Activated CD4-positive, alpha-beta memory T cell treated with anti-CD3 and anti-CD28 coated beads, Interleukin-2, amount 10 ng/mL, durations not matched to agents 7 days and 5 days (primary cell): ENCODE measurements at regions of chrX and their contacts with region 1.

Region 1: DNA sequence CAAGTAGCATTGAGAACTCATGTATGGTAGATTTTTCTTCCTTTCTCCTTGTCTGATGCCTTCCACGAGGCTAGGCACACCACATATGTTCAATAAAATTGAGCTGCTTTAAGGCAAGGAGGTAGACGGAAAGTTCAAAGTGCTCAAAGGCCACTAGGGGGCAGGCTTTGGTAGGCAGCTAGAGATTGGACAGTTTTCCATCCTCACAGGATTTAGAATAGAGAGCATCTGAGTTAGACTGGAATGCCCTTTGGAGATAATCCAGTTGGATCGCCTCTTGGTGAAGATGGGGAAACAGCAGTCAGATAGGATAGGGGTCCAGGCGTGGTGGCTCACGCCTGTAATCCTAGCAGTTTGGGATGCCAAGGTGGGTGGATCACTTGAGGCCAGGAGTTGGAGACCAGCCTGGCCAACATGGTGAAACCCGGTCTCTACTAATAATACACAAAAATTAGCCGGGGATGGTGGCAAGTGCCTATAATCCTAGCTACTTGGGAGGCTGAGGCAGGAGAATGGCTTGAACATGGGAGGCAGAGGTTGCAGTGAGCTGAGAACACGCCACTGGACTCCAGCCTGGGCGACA is 30.4 kb downstream of the ELF4 start:
- DNase-seq: peak; percentile 64
- H3K4me3 Mint-ChIP-seq: no peak overlapping the region
- H3K27ac Mint-ChIP-seq: peak overlapping the region; percentile 30
- H3K4me1 Mint-ChIP-seq: peaks cover 46% of the 10 kb centered on the region
- H3K27me3 Mint-ChIP-seq: no peaks in the 10 kb centered on the region

Region 2: DNA sequence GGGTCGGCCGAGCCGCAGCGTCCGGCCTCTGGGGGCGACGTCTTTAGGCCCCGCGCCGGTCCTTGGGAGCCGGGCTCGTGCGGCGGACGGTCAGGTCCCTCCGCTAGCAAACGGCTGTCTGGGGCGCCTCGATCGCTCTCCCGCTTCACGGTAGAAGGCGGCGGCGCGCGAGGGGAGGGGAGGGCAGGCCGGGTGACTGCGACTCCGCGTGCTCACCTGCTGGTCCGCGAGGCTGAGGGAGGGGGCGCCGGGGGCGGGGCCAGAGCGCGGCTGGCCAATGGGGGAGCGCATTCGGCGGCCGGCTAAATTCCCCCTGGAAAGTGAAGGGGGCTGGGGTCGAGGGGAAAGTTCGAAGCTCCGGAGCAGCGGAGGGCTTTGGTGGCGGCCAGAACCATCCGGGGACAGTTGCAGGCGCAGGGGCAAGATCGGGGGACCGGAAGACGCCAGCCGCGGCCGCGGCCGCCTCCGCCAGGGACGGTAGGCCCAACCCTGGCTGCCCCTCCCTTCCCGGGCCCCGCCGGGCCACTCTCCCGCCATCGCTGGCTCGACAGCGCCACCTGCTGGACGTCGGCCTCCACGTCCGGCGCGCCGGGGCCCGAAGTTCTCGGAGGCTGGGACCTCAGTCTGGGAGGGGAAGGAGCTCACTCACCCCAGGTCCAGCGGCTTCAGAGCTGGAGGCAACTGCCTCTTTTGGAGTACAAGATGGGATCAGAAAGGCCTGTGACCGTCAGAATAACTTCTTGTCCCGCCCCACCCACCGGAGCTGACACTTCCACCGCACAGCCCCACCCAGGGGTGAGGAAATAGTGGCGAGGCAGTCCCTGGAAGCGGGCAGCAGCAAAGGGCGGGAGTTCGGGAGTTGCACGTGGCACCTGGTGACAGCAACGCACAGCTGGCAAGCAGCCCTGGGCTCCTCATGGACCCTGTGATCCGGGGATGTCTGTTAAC is 19.5 kb before region 1 on chrX:
- CTCF ChIA-PET with region 1: interaction called, 12 read pairs
- POLR2A ChIA-PET with region 1: interaction called, 3 read pairs
- DNase-seq: peak; percentile 84
- H3K4me3 Mint-ChIP-seq: peak overlapping the region; percentile 73
- H3K27ac Mint-ChIP-seq: peak overlapping the region; percentile 68
- H3K4me1 Mint-ChIP-seq: peaks cover 6% of the 10 kb centered on the region
- H3K27me3 Mint-ChIP-seq: no peaks in the 10 kb centered on the region

Region 3: GRCh38 chrX:130110379-130111219 is 30.7 kb after region 1 on chrX and contains the start of gene ELF4:
- CTCF ChIA-PET with region 1: interaction called, 15 read pairs
- POLR2A ChIA-PET with region 1: interaction called, 59 read pairs
- DNase-seq: peak; percentile 57
- H3K4me3 Mint-ChIP-seq: peak within 1 kb of the TSS; percentile 95
- H3K27ac Mint-ChIP-seq: peak within 1 kb of the TSS; percentile 90
- H3K4me1 Mint-ChIP-seq: peaks cover 45% of the 10 kb centered on the region
- H3K27me3 Mint-ChIP-seq: no peaks in the 10 kb centered on the region
- total RNA-seq, gene ELF4: 48.0 to 48.7 TPM

Region 4: GRCh38 chrX:130120746-130121504 is 41.0 kb after region 1 on chrX:
- CTCF ChIA-PET with region 1: interaction called, 103 read pairs
- POLR2A ChIA-PET with region 1: interaction called, 55 read pairs
- DNase-seq: peak; percentile 69
- H3K4me3 Mint-ChIP-seq: peak overlapping the region; percentile 65
- H3K27ac Mint-ChIP-seq: peak overlapping the region; percentile 59
- H3K4me1 Mint-ChIP-seq: peaks cover 33% of the 10 kb centered on the region
- H3K27me3 Mint-ChIP-seq: no peaks in the 10 kb centered on the region

Region 5: DNA sequence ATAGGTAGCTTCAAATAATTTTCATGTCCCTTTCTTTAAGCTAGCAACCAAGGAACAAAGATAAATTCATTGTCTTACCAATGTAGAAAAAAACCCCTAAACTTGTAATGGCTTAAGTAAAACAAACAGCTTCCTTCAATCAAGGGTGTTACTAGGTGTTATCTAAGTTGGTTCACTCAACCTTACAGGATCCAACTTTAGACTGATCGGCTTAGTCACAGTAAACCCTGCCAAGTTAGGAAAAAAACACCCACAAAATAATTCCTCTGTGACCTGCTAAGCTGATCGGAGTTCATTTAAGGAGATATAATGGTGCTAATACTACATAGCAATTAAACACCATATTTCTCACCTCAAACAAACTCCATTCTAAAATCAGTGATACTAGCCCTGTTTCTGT is 75.6 kb after region 1 on chrX:
- CTCF ChIA-PET with region 1: interaction called, 13 read pairs
- POLR2A ChIA-PET with region 1: interaction called, 3 read pairs
- DNase-seq: no peak
- H3K4me3 Mint-ChIP-seq: no peak overlapping the region
- H3K27ac Mint-ChIP-seq: no peak overlapping the region
- H3K4me1 Mint-ChIP-seq: peaks cover 9% of the 10 kb centered on the region
- H3K27me3 Mint-ChIP-seq: no peaks in the 10 kb centered on the region

Region 6: DNA sequence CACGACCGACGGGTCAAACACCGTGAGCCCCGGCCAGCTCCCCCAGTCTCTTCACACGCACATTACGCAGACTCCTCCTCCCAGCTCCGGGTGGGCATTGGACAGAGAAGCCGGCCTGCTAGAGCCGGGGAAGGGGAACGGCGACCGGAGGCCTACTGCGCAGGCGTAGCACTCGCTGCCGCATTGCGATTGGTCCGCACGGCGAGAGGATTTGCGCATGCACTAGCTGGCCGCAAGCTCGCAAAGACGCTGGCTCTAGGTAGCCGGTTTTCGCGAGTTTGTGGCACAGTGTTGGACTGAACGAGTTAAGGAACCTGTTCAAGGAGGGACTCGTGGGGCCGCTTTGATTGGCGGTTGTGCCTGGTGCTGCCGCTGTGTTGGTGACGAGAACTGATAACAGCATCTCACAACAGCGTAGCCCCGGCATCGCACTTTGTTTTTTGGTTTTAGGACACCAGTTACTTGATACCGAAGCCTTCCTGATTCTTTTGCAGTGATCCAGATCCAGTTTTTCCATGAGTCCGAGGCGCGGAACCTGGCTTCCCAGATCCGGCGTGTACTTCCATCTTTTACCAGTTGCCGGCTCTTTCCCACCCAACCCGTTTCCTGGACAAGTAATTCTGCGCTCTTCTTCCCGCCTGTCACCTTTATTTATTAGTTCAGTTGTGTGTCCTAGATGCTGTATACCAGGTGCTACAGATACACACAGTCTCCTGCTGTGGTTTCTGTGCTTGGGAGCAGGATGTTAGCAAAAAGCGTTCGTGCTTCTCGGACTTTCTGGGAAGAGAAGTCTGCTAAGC is 86.0 kb after region 1 on chrX and contains the start of gene AIFM1:
- CTCF ChIA-PET with region 1: interaction called, 12 read pairs
- POLR2A ChIA-PET with region 1: interaction called, 38 read pairs
- DNase-seq: peak; percentile 90
- H3K4me3 Mint-ChIP-seq: peak within 1 kb of the TSS; percentile 82
- H3K27ac Mint-ChIP-seq: peak within 1 kb of the TSS; percentile 92
- H3K4me1 Mint-ChIP-seq: peaks cover 50% of the 10 kb centered on the region
- H3K27me3 Mint-ChIP-seq: no peaks in the 10 kb centered on the region
- total RNA-seq, gene AIFM1: 41.2 to 41.8 TPM

Region 7: GRCh38 chrX:130196466-130196865 is 116.6 kb after region 1 on chrX:
- CTCF ChIA-PET with region 1: interaction called, 98 read pairs
- POLR2A ChIA-PET with region 1: interaction called, 3 read pairs
- DNase-seq: no peak
- H3K4me3 Mint-ChIP-seq: no peak overlapping the region
- H3K27ac Mint-ChIP-seq: no peak overlapping the region
- H3K4me1 Mint-ChIP-seq: peaks cover 8% of the 10 kb centered on the region
- H3K27me3 Mint-ChIP-seq: no peaks in the 10 kb centered on the region